Colonic mucosa (tissue), 4 donors: ENCODE measurements at regions of chr6 and their contacts with region 1.

Region 1: GRCh38 chr6:31541658-31542521 is at the start of gene DDX39B:
- DNase-seq: peak; percentile 96
- H3K4me3 ChIP-seq: peak within 1 kb of the TSS; percentile 72
- H3K27ac ChIP-seq: peak within 1 kb of the TSS; percentile 95
- H3K4me1 ChIP-seq: peaks cover 11% of the 10 kb centered on the region
- H3K27me3 ChIP-seq: no peaks in the 10 kb centered on the region
- CTCF ChIP-seq: no peak
- total RNA-seq, gene DDX39B: 213 to 422 TPM

Region 2: GRCh38 chr6:31493875-31494694 is 47.8 kb before region 1 on chr6:
- intact Hi-C with region 1: loop called (anchors 10 kb)
- DNase-seq: peak; percentile 92
- H3K4me3 ChIP-seq: peak overlapping the region; percentile 53
- H3K27ac ChIP-seq: peak overlapping the region; percentile 66
- H3K4me1 ChIP-seq: no peaks in the 10 kb centered on the region
- H3K27me3 ChIP-seq: no peaks in the 10 kb centered on the region
- CTCF ChIP-seq: peak; percentile 73